ENCODE measurements at regions of chr4 and their contacts with region 1.

Region 1: GRCh38 chr4:170374770-170375169 is 285.0 kb upstream of the AADAT start:
- DNase-seq: peak; percentile 47
- CTCF ChIP-seq: peak; percentile 65

Region 2: DNA sequence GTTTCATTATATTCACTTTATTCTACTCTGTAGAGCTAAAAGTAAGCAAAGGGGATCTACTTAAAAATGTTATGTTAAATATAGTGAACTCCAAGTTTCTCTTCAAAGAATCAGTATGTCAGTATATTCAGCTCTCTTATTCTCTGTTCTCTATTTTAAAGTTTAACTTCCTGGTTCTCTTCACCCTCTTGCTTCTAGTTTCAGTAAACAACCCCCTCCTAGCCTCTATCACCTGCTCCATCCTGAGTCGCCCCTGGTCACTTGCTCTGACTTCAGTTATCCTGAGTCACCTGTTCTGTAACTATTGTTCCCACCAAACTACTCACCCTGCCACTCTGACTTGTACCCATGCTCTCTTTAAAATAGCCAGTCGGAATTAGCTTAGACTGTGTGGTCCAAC is 104.1 kb before region 1 on chr4:
- CTCF ChIA-PET with region 1: interaction called, 14 read pairs
- POLR2A ChIA-PET with region 1: no interaction called
- DNase-seq: no peak
- CTCF ChIP-seq: no peak

Measured in GM10248 (cell line).